G401 (cell line): ENCODE measurements at regions of chr2 and their contacts with region 1.

Region 1: GRCh38 chr2:199488772-199489400 is 31.1 kb upstream of the SATB2 start:
- DNase-seq: peak; percentile 39

Region 2: DNA sequence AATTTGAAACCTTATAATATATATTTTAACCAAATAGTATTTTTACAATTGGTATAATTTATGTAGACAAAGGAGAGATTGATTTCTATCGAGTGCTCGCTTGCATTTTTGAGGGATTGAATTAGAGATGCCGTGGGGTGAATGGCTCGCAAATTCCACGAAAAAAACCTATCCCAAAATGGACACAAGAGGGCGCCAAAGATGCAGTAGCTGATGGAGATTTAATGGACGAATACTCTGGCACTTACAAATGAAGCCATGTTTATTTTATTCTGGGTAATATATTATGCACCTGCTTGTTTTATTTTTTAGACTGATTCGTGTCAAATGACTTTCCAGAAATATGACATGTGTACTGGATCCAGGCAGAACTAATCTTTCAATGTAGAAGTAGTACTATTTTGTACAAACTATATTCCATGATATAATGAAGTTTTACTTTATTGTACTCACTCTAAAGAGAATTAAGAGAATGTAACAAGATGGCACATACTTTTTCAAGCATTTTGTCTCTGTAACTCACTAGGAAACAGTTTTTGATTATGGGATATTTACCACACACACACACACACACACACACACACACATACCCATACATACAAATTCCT is 1179.1 kb before region 1 on chr2:
- in situ Hi-C with region 1: loop called (anchors 25 kb)
- DNase-seq: peak; percentile 51